ENCODE measurements at regions of chr5 and their contacts with region 1.

Region 1: DNA sequence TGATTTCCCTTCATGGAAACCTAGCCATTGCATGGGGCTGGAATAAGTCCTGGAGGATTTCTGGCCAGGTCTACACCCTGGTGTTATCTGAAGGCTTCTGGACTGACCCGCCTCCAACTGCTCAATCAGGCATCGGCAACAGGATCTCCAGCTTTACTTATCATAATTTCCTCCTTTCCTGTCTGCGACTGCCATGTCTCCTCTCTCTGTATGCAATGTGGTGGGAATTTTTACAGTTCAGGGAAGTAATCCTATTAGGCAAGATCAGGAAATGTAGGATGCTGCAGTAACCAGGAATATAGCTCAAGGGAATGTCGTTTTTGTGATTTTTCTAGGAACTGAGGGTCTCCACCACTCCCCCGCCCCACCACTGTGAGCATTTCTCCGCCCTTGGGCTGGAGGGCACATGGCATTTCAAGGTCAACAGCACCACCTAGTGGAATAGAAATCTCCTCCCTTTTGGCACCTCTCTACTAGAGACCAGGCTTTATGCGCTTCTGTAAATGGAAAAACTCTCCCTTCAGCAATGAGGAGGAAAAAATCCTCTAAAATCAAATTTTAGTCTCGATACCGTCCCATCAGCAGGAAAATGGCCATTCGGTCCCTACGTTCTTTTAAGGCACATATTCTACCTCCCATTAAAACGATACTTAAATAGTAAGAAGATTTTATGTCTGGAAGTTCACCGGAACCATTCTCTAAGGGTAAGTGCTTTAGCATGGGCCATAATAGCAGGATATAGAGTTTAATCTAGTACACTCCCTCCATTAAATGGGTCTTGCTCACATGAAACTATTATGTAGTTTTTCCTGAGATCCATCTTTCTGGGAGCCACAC is 93.0 kb downstream of the YTHDC2 start:
- DNase-seq: peak; percentile 53 to 79 (median 61)
- ATAC-seq: peak; percentile 99
- H3K4me3 ChIP-seq: no peak overlapping the region
- H3K27ac ChIP-seq: no peak overlapping the region
- H3K4me1 ChIP-seq: peaks cover 0 to 5% of the 10 kb centered on the region in 2 experiments; a peak in 3 of 5 replicates
- H3K27me3 ChIP-seq: no peaks in the 10 kb centered on the region
- CTCF ChIP-seq: peak; percentile 76 to 86 (median 86)
- EP300 ChIP-seq: no peak
- POLR2A ChIP-seq: no peak
- RAD21 ChIP-seq: peak; percentile 91 to 95

Region 2: GRCh38 chr5:112691758-112692157 is 914.8 kb before region 1 on chr5:
- CTCF ChIA-PET with region 1: interaction called, 3 read pairs
- POLR2A ChIA-PET with region 1: no interaction called
- in situ Hi-C with region 1: no loop called
- intact Hi-C with region 1: loop called (anchors 10 kb)
- DNase-seq: peak; percentile 44 to 82 (median 56)
- ATAC-seq: peak; percentile 86
- H3K4me3 ChIP-seq: no peak overlapping the region
- H3K27ac ChIP-seq: no peak overlapping the region
- H3K4me1 ChIP-seq: peaks cover 0 to 33% of the 10 kb centered on the region in 2 experiments; a peak in 3 of 5 replicates
- H3K27me3 ChIP-seq: no peaks in the 10 kb centered on the region
- CTCF ChIP-seq: peak; percentile 74 to 83 (median 79)
- EP300 ChIP-seq: no peak
- POLR2A ChIP-seq: no peak
- RAD21 ChIP-seq: peak; percentile 58 to 91

Region 3: GRCh38 chr5:113043491-113043931 is 563.0 kb before region 1 on chr5:
- CTCF ChIA-PET with region 1: no interaction called
- POLR2A ChIA-PET with region 1: no interaction called
- in situ Hi-C with region 1: no loop called
- intact Hi-C with region 1: loop called (anchors 2 kb)
- DNase-seq: peak in 3 of 4 experiments; percentile 23 to 51 (median 50)
- ATAC-seq: peak; percentile 49
- H3K4me3 ChIP-seq: no peak overlapping the region
- H3K27ac ChIP-seq: peak overlapping the region; percentile 92
- H3K4me1 ChIP-seq: peaks cover 37 to 49% of the 10 kb centered on the region in 2 experiments
- H3K27me3 ChIP-seq: no peaks in the 10 kb centered on the region
- CTCF ChIP-seq: peak in 2 of 3 experiments; percentile 17 to 19; a peak in 3 of 6 replicates
- EP300 ChIP-seq: no peak
- POLR2A ChIP-seq: no peak
- RAD21 ChIP-seq: peak in 1 of 2 experiments; percentile 38; a peak in 2 of 4 replicates

Region 4: GRCh38 chr5:113378959-113379541 is 227.5 kb before region 1 on chr5:
- CTCF ChIA-PET with region 1: interaction called, 7 read pairs
- POLR2A ChIA-PET with region 1: no interaction called
- in situ Hi-C with region 1: no loop called
- intact Hi-C with region 1: loop called (anchors 1 kb)
- DNase-seq: peak; percentile 42 to 62 (median 58)
- ATAC-seq: peak; percentile 82
- H3K4me3 ChIP-seq: no peak overlapping the region
- H3K27ac ChIP-seq: no peak overlapping the region
- H3K4me1 ChIP-seq: no peaks in the 10 kb centered on the region
- H3K27me3 ChIP-seq: no peaks in the 10 kb centered on the region
- CTCF ChIP-seq: peak; percentile 56 to 76 (median 73)
- EP300 ChIP-seq: no peak
- POLR2A ChIP-seq: no peak
- RAD21 ChIP-seq: peak; percentile 43 to 76

Region 5: GRCh38 chr5:113513384-113514288 is 92.9 kb before region 1 on chr5 and contains the start of gene YTHDC2:
- CTCF ChIA-PET with region 1: no interaction called
- POLR2A ChIA-PET with region 1: no interaction called
- in situ Hi-C with region 1: no loop called
- intact Hi-C with region 1: loop called (anchors 5 kb)
- DNase-seq: peak; percentile 77 to 91 (median 80)
- ATAC-seq: peak; percentile 97
- H3K4me3 ChIP-seq: peak within 1 kb of the TSS; percentile 80
- H3K27ac ChIP-seq: peak within 1 kb of the TSS; percentile 90
- H3K4me1 ChIP-seq: peaks cover 0 to 6% of the 10 kb centered on the region in 2 experiments; a peak in 2 of 5 replicates
- H3K27me3 ChIP-seq: no peaks in the 10 kb centered on the region; a peak in 1 of 5 replicates
- CTCF ChIP-seq: peak; percentile 40 to 54 (median 48); a peak in 5 of 6 replicates
- EP300 ChIP-seq: no peak
- POLR2A ChIP-seq: peak; percentile 91
- RAD21 ChIP-seq: peak; percentile 21 to 52; a peak in 2 of 4 replicates
- polyA plus RNA-seq, gene YTHDC2: 2.7 to 5.1 TPM

Region 6: DNA sequence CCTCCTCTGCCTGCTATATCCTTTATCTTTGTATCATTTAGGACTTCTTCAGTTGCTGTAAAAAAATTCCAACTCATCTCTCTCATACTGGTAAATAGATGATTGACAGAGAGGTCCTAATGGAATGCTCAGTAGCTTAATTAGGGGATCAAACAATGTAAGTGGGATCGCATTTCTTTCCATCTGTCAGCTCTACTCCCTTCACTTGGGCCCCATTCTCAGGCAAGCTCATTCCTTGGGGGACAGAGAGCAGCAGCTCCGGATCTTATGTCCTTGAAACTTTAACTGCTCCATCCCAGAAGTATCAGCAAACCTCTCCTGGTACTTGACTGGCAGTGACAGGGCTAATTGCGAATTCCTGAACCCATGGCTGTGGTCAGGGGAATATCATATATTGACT is 53.7 kb after region 1 on chr5:
- CTCF ChIA-PET with region 1: no interaction called
- POLR2A ChIA-PET with region 1: no interaction called
- in situ Hi-C with region 1: no loop called
- intact Hi-C with region 1: no loop called
- DNase-seq: no peak
- ATAC-seq: no peak
- H3K4me3 ChIP-seq: no peak overlapping the region
- H3K27ac ChIP-seq: no peak overlapping the region
- H3K4me1 ChIP-seq: no peaks in the 10 kb centered on the region
- H3K27me3 ChIP-seq: no peaks in the 10 kb centered on the region
- CTCF ChIP-seq: no peak
- EP300 ChIP-seq: no peak
- POLR2A ChIP-seq: no peak
- RAD21 ChIP-seq: no peak